MCF 10A (cell line): ENCODE measurements at regions of chr9 and their contacts with region 1.

Region 1: DNA sequence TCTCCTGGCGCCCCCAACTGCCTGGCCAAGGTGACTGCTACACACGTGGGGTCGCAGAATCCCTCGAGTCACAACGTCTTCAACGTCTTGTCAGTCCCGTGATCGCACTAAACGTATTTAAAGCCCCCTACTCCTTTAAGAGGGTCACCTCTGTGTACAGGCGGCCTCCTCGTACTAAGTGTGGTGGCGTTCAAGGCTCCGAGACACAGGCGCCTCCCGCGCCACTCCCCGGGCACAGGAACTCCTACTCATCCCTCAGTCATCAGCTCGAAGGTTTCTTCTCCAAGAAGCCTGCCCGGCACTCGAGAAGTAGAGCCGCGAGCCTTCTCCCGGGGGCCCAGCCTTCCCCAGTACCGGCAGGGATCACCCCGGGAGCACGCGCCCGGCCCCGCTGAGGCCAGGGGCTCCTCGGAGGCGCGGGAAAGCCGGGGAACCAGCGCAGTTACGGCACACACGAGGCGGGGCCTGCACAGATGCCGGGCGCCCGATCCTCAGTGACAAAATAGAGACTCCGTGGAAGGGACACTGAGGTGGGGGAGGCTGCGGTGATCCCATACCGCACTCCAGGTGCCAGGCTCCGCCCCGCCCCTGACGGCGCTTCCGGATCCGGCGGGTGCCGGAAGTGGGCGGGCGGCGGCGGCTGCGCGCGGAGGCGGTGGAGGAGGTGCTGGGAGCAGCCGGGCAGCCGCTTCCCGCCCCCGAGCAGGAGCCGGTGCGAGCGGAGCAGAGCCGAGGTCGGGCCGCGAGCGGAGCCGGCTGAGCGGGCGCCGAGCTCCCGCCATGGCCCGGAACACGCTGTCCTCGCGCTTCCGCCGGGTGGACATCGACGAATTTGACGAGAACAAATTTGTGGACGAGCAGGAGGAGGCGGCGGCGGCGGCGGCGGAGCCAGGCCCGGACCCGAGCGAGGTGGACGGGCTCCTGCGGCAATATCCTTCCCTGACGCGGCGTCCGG is 6.9 kb downstream of the ARPC5L start:
- DNase-seq: peak; percentile 86
- H3K4me3 Mint-ChIP-seq: peak overlapping the region; percentile 95
- H3K27ac Mint-ChIP-seq: peak overlapping the region; percentile 97
- H3K4me1 Mint-ChIP-seq: peaks cover 33% of the 10 kb centered on the region
- H3K27me3 Mint-ChIP-seq: no peaks in the 10 kb centered on the region
- CTCF ChIP-seq: no peak

Region 2: GRCh38 chr9:124639637-124640036 is 229.2 kb before region 1 on chr9:
- CTCF ChIA-PET with region 1: no interaction called
- POLR2A ChIA-PET with region 1: no interaction called
- intact Hi-C with region 1: no loop called
- DNase-seq: no peak
- H3K4me3 Mint-ChIP-seq: no peak overlapping the region
- H3K27ac Mint-ChIP-seq: no peak overlapping the region
- H3K4me1 Mint-ChIP-seq: no peaks in the 10 kb centered on the region
- H3K27me3 Mint-ChIP-seq: no peaks in the 10 kb centered on the region
- CTCF ChIP-seq: no peak

Region 3: DNA sequence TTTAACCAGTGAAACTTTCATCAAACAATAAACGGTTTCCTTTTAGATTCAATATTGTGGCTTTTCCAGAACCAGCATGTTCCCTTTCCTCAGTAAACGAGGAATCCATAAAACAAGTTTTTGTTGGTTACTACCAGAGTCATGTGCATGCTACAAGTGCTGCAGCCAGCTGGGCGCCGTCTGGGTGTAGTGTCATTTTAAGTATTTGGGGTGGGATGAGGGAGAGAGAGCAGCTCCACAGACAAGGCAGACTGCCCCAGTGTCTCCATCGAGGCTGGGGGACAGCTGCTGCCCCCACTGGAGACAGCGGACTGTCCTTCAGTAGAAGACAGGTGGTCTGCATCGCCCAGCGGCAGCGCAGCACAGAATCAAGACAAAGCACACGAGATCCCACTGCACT is 10.4 kb after region 1 on chr9:
- CTCF ChIA-PET with region 1: no interaction called
- POLR2A ChIA-PET with region 1: interaction called, 135 read pairs
- intact Hi-C with region 1: no loop called
- DNase-seq: no peak
- H3K4me3 Mint-ChIP-seq: no peak overlapping the region
- H3K27ac Mint-ChIP-seq: peak overlapping the region; percentile 57
- H3K4me1 Mint-ChIP-seq: no peaks in the 10 kb centered on the region
- H3K27me3 Mint-ChIP-seq: no peaks in the 10 kb centered on the region
- CTCF ChIP-seq: no peak

Region 4: GRCh38 chr9:124894741-124895170 is 26.0 kb after region 1 on chr9:
- CTCF ChIA-PET with region 1: interaction called, 19 read pairs
- POLR2A ChIA-PET with region 1: interaction called, 10 read pairs
- intact Hi-C with region 1: loop called (anchors 2 kb)
- DNase-seq: peak; percentile 54
- H3K4me3 Mint-ChIP-seq: no peak overlapping the region
- H3K27ac Mint-ChIP-seq: peak overlapping the region; percentile 74
- H3K4me1 Mint-ChIP-seq: peaks cover 5% of the 10 kb centered on the region
- H3K27me3 Mint-ChIP-seq: no peaks in the 10 kb centered on the region
- CTCF ChIP-seq: peak; percentile 47